CD4-positive, alpha-beta memory T cell (primary cell): ENCODE measurements at regions of chr12 and their contacts with region 1.

Region 1: DNA sequence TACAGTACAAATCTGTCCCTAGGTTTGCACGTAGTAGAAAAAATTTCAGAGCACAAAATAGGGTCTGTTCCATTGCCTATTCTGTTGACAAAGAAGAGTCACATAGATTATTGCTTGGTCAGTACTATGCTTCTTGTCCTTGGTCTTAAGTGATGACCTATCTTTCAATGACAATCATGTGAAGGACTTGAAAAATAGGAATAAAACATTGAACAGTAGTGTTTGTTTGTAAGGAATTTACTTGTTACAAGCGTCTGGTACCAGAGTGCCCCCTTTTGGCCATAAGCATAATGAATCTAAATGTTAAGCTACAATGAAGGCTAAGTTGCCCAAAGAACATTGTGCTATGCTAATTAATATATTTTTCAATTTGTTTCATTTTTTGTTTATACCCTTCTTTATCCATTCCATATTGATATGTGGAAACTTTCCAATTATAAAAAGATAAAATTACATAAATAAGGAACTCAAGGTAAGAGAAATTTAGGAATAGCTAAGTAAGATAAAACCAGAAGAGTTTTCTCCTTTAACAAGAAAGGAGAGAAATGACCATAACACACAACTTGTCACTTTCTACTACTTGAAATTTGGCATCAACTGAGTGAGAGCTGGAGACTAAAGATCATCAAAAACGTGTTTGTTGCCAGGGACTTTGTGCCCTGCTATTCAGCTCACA is 204.7 kb downstream of the EPS8 start:
- DNase-seq: peak in 4 of 5 donors; percentile 47 to 51 (median 49)
- H3K4me3 ChIP-seq: no peak overlapping the region
- H3K4me3 Mint-ChIP-seq: no peak overlapping the region
- H3K27ac ChIP-seq: no peak overlapping the region
- H3K27ac Mint-ChIP-seq: no peak overlapping the region
- H3K4me1 ChIP-seq: no peaks in the 10 kb centered on the region
- H3K4me1 Mint-ChIP-seq: peaks cover 0 to 7% (median 4%) of the 10 kb centered on the region in 4 donors
- H3K27me3 ChIP-seq: no peaks in the 10 kb centered on the region
- H3K27me3 Mint-ChIP-seq: no peaks in the 10 kb centered on the region

Region 2: GRCh38 chr12:15151161-15152120 is 433.1 kb before region 1 on chr12:
- CTCF ChIA-PET with region 1: no interaction called
- POLR2A ChIA-PET with region 1: no interaction called
- intact Hi-C with region 1: loop called (anchors 5 kb)
- DNase-seq: peak in 1 of 5 donors; percentile 1
- H3K4me3 ChIP-seq: no peak overlapping the region
- H3K4me3 Mint-ChIP-seq: no peak overlapping the region
- H3K27ac ChIP-seq: no peak overlapping the region
- H3K27ac Mint-ChIP-seq: no peak overlapping the region
- H3K4me1 ChIP-seq: no peaks in the 10 kb centered on the region
- H3K4me1 Mint-ChIP-seq: no peaks in the 10 kb centered on the region
- H3K27me3 ChIP-seq: no peaks in the 10 kb centered on the region
- H3K27me3 Mint-ChIP-seq: peaks cover 5 to 13% of the 10 kb centered on the region in 2 donors

Region 3: GRCh38 chr12:15276088-15276698 is 308.3 kb before region 1 on chr12:
- CTCF ChIA-PET with region 1: interaction called, 30 read pairs
- POLR2A ChIA-PET with region 1: no interaction called
- intact Hi-C with region 1: loop called (anchors 1 kb)
- DNase-seq: peak in 1 of 5 donors; percentile 0
- H3K4me3 ChIP-seq: no peak overlapping the region
- H3K4me3 Mint-ChIP-seq: no peak overlapping the region
- H3K27ac ChIP-seq: no peak overlapping the region
- H3K27ac Mint-ChIP-seq: no peak overlapping the region
- H3K4me1 ChIP-seq: peaks cover 10% of the 10 kb centered on the region
- H3K4me1 Mint-ChIP-seq: peaks cover 2 to 12% (median 7%) of the 10 kb centered on the region in 4 donors
- H3K27me3 ChIP-seq: no peaks in the 10 kb centered on the region
- H3K27me3 Mint-ChIP-seq: peaks cover 5 to 9% of the 10 kb centered on the region in 2 donors

Region 4: GRCh38 chr12:15522565-15523187 is 61.8 kb before region 1 on chr12:
- CTCF ChIA-PET with region 1: interaction called, 23 read pairs
- POLR2A ChIA-PET with region 1: no interaction called
- intact Hi-C with region 1: no loop called
- DNase-seq: peak in 1 of 5 donors; percentile 24
- H3K4me3 ChIP-seq: no peak overlapping the region
- H3K4me3 Mint-ChIP-seq: no peak overlapping the region
- H3K27ac ChIP-seq: no peak overlapping the region
- H3K27ac Mint-ChIP-seq: no peak overlapping the region
- H3K4me1 ChIP-seq: no peaks in the 10 kb centered on the region
- H3K4me1 Mint-ChIP-seq: no peaks in the 10 kb centered on the region
- H3K27me3 ChIP-seq: no peaks in the 10 kb centered on the region
- H3K27me3 Mint-ChIP-seq: peaks cover 10 to 33% of the 10 kb centered on the region in 2 donors

Region 5: DNA sequence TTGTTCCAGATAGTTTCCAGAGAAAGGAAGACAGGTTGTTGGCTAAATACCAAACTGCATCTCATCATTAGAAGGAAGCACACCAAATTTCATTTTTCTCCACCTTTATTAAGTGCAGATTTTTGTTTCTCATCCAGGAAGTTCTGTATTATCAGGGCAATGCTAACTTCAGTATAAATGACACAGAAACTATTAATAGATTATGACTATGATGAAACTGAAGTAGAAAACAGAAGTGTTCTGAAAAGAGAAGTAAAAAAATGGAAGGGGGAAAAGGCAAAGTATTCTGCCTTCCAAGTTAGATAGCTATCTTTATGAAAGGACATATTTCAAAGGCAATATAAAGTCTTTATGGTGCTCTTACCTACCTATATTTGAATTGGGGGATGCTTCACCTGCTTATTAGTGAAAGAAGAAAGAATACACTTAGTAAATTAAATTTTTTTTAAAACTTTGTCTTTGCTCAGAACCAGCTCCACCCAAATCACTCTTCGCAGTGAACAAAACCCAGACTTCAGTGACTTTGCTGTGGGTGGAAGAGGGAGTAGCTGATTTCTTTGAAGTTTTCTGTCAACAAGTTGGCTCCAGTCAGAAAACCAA is 38.3 kb before region 1 on chr12:
- CTCF ChIA-PET with region 1: interaction called, 59 read pairs
- POLR2A ChIA-PET with region 1: interaction called, 8 read pairs
- intact Hi-C with region 1: no loop called
- DNase-seq: peak; percentile 65 to 74 (median 68)
- H3K4me3 ChIP-seq: no peak overlapping the region
- H3K4me3 Mint-ChIP-seq: peak overlapping the region; percentile 22 to 80 (median 59)
- H3K27ac ChIP-seq: peak overlapping the region; percentile 30
- H3K27ac Mint-ChIP-seq: peak overlapping the region; percentile 85 to 98 (median 88)
- H3K4me1 ChIP-seq: peaks cover 50% of the 10 kb centered on the region
- H3K4me1 Mint-ChIP-seq: peaks cover 35 to 62% (median 42%) of the 10 kb centered on the region in 4 donors
- H3K27me3 ChIP-seq: no peaks in the 10 kb centered on the region
- H3K27me3 Mint-ChIP-seq: no peaks in the 10 kb centered on the region

Region 6: DNA sequence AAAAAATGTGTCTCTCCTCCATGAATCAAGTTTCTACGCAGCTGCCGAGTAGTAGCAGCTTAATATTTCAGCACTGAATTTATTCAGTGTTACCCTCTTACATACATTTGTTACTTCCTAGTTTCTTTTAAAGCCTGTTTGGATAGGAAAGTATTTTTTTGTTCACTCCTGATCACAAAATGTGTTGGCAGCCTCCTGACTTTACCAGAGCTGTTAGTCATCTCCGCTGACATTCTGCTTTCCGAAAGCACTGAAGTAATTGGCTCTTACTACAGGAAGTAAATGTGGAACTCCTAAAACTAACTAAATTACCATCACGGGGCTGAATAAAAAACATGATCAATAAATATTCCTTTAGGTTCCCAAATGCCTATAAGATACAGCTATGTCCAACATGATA is 20.8 kb before region 1 on chr12:
- CTCF ChIA-PET with region 1: interaction called, 10 read pairs
- POLR2A ChIA-PET with region 1: no interaction called
- intact Hi-C with region 1: loop called (anchors 2 kb)
- DNase-seq: peak in 4 of 5 donors; percentile 33 to 41 (median 34)
- H3K4me3 ChIP-seq: peak overlapping the region; percentile 7 to 33
- H3K4me3 Mint-ChIP-seq: peak overlapping the region; percentile 58 to 83 (median 78)
- H3K27ac ChIP-seq: peak overlapping the region; percentile 43
- H3K27ac Mint-ChIP-seq: peak overlapping the region; percentile 80 to 93 (median 90)
- H3K4me1 ChIP-seq: peaks cover 54% of the 10 kb centered on the region
- H3K4me1 Mint-ChIP-seq: peaks cover 28 to 44% (median 39%) of the 10 kb centered on the region in 4 donors
- H3K27me3 ChIP-seq: no peaks in the 10 kb centered on the region
- H3K27me3 Mint-ChIP-seq: no peaks in the 10 kb centered on the region

Region 7: GRCh38 chr12:15613981-15614380 is 29.5 kb after region 1 on chr12:
- CTCF ChIA-PET with region 1: no interaction called
- POLR2A ChIA-PET with region 1: no interaction called
- intact Hi-C with region 1: no loop called
- DNase-seq: no peak
- H3K4me3 ChIP-seq: no peak overlapping the region
- H3K4me3 Mint-ChIP-seq: no peak overlapping the region
- H3K27ac ChIP-seq: no peak overlapping the region
- H3K27ac Mint-ChIP-seq: no peak overlapping the region
- H3K4me1 ChIP-seq: no peaks in the 10 kb centered on the region
- H3K4me1 Mint-ChIP-seq: no peaks in the 10 kb centered on the region
- H3K27me3 ChIP-seq: no peaks in the 10 kb centered on the region
- H3K27me3 Mint-ChIP-seq: peaks cover 5 to 6% of the 10 kb centered on the region in 2 donors

Region 8: GRCh38 chr12:15732341-15733061 is 148.0 kb after region 1 on chr12:
- CTCF ChIA-PET with region 1: no interaction called
- POLR2A ChIA-PET with region 1: no interaction called
- intact Hi-C with region 1: no loop called
- DNase-seq: no peak
- H3K4me3 ChIP-seq: no peak overlapping the region
- H3K4me3 Mint-ChIP-seq: no peak overlapping the region
- H3K27ac ChIP-seq: no peak overlapping the region
- H3K27ac Mint-ChIP-seq: no peak overlapping the region
- H3K4me1 ChIP-seq: no peaks in the 10 kb centered on the region
- H3K4me1 Mint-ChIP-seq: no peaks in the 10 kb centered on the region
- H3K27me3 ChIP-seq: no peaks in the 10 kb centered on the region
- H3K27me3 Mint-ChIP-seq: peaks cover 0 to 7% of the 10 kb centered on the region in 2 donors